ENCODE measurements at regions of chr3 and their contacts with region 1.

Region 1: GRCh38 chr3:15051531-15051930 is 13.6 kb downstream of the MRPS25 start:
- DNase-seq: peak; percentile 41
- ATAC-seq: no peak
- H3K4me3 ChIP-seq: no peak overlapping the region
- H3K4me3 Mint-ChIP-seq: peak overlapping the region; percentile 13
- H3K27ac ChIP-seq: peak overlapping the region; percentile 72 to 86
- H3K27ac Mint-ChIP-seq: peak overlapping the region; percentile 93
- H3K4me1 ChIP-seq: peaks cover 52 to 64% of the 10 kb centered on the region in 2 donors
- H3K4me1 Mint-ChIP-seq: peaks cover 65% of the 10 kb centered on the region
- H3K27me3 ChIP-seq: no peaks in the 10 kb centered on the region
- H3K27me3 Mint-ChIP-seq: no peaks in the 10 kb centered on the region
- CTCF ChIP-seq: peak; percentile 59

Region 2: GRCh38 chr3:15074493-15074892 is 23.0 kb after region 1 on chr3:
- CTCF ChIA-PET with region 1: no interaction called
- POLR2A ChIA-PET with region 1: no interaction called
- intact Hi-C with region 1: no loop called
- DNase-seq: no peak
- ATAC-seq: no peak
- H3K4me3 ChIP-seq: no peak overlapping the region
- H3K4me3 Mint-ChIP-seq: no peak overlapping the region
- H3K27ac ChIP-seq: no peak overlapping the region
- H3K27ac Mint-ChIP-seq: no peak overlapping the region
- H3K4me1 ChIP-seq: no peaks in the 10 kb centered on the region
- H3K4me1 Mint-ChIP-seq: no peaks in the 10 kb centered on the region
- H3K27me3 ChIP-seq: no peaks in the 10 kb centered on the region
- H3K27me3 Mint-ChIP-seq: no peaks in the 10 kb centered on the region
- CTCF ChIP-seq: no peak

Region 3: GRCh38 chr3:15098503-15099363 is 47.2 kb after region 1 on chr3 and contains the start of gene RBSN:
- CTCF ChIA-PET with region 1: no interaction called
- POLR2A ChIA-PET with region 1: interaction called, 12 read pairs
- intact Hi-C with region 1: loop called (anchors 1 kb)
- DNase-seq: peak; percentile 97
- ATAC-seq: peak; percentile 84
- H3K4me3 ChIP-seq: peak within 1 kb of the TSS; percentile 73 to 94 (median 82)
- H3K4me3 Mint-ChIP-seq: peak within 1 kb of the TSS; percentile 98
- H3K27ac ChIP-seq: peak within 1 kb of the TSS; percentile 91 to 97
- H3K27ac Mint-ChIP-seq: peak within 1 kb of the TSS; percentile 96
- H3K4me1 ChIP-seq: peaks cover 13 to 23% of the 10 kb centered on the region in 2 donors
- H3K4me1 Mint-ChIP-seq: peaks cover 30% of the 10 kb centered on the region
- H3K27me3 ChIP-seq: peaks cover 0 to 9% (median 0%) of the 10 kb centered on the region in 4 experiments
- H3K27me3 Mint-ChIP-seq: no peaks in the 10 kb centered on the region
- CTCF ChIP-seq: no peak
- total RNA-seq, gene RBSN: 31.2 and 32.6 TPM in 2 replicates

Measured in B cell (primary cell).